SK-N-SH (cell line): ENCODE measurements at regions of chr6 and their contacts with region 1.

Region 1: GRCh38 chr6:130858498-130859160 is 31.4 kb downstream of the SMLR1 start:
- DNase-seq: no peak
- H3K4me3 ChIP-seq: no peak overlapping the region
- H3K27ac ChIP-seq: no peak overlapping the region
- H3K4me1 ChIP-seq: no peaks in the 10 kb centered on the region
- H3K27me3 ChIP-seq: no peaks in the 10 kb centered on the region
- CTCF ChIP-seq: no peak
- EP300 ChIP-seq: no peak
- RAD21 ChIP-seq: no peak

Region 2: GRCh38 chr6:130872250-130873095 is 13.8 kb after region 1 on chr6:
- CTCF ChIA-PET with region 1: interaction called, 11 read pairs
- POLR2A ChIA-PET with region 1: no interaction called
- DNase-seq: peak; percentile 15
- H3K4me3 ChIP-seq: peak overlapping the region in 1 of 2 experiments; percentile 24; a peak in 1 of 4 replicates
- H3K27ac ChIP-seq: no peak overlapping the region
- H3K4me1 ChIP-seq: no peaks in the 10 kb centered on the region
- H3K27me3 ChIP-seq: no peaks in the 10 kb centered on the region; the same call in 1 of the 2 replicates
- CTCF ChIP-seq: peak; percentile 97
- EP300 ChIP-seq: no peak
- RAD21 ChIP-seq: peak; percentile 62